ENCODE measurements at regions of chr10 and their contacts with region 1.

Region 1: DNA sequence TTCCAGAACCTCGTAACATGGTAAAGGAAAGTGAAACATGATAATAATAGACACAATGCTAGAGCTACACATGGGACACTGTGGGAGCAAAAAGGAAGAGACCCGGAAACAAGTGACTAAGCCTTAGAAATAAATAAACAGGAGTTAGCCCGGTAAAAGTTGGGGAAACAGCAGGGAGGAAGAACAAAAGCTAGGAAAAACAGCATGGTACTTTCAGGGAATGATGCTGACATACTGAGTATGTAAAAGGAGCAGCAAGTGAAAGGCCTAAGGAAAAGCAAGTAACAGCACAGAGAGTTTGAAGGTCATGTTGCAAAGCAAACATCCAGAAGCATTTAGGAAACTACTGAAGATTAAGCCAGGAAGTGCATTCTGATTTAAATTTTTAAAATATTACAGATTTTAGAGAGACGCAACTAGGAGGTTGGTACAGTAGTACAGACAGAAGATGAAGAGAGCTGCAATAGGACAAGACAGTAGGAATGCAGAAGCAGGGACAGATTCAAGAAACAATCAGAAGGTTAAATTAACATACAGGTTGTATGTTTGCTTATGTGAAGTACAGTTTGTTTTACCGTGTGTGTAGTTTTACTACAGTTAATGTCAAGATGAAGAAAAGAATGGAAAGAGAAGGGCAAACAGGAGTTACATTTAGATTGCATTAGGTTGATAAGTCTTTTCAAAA is 63.7 kb downstream of the ARHGAP12 start:
- DNase-seq: peak; percentile 85
- H3K4me3 ChIP-seq: peak overlapping the region in 1 of 3 experiments; percentile 60
- H3K27ac ChIP-seq: peak overlapping the region; percentile 29
- H3K4me1 ChIP-seq: peaks cover 22% of the 10 kb centered on the region
- H3K27me3 ChIP-seq: no peaks in the 10 kb centered on the region
- CTCF ChIP-seq: no peak
- POLR2A ChIP-seq: no peak

Region 2: DNA sequence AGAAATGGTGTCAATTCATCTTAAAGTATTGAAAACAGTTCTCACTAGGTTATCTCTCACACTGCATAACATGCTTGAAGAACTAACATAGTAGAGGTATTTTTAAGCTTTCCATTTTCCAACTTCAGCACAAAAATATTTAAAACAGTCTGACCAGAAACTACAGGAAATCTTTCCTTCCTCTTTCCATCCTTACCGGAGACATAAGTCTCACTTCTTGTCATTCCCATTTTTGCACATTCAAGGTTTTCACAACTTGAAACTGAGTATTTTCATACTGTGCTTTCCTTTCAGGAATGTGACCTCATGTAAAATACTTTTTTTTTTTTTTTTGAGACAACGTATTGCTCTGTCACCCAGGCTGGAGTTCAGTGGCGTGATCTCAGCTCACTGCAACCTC is 18.4 kb after region 1 on chr10:
- CTCF ChIA-PET with region 1: interaction called, 10 read pairs
- POLR2A ChIA-PET with region 1: no interaction called
- dilution Hi-C with region 1: no loop called
- intact Hi-C with region 1: no loop called
- DNase-seq: peak; percentile 13
- H3K4me3 ChIP-seq: no peak overlapping the region
- H3K27ac ChIP-seq: no peak overlapping the region
- H3K4me1 ChIP-seq: peaks cover 5% of the 10 kb centered on the region
- H3K27me3 ChIP-seq: no peaks in the 10 kb centered on the region
- CTCF ChIP-seq: no peak
- POLR2A ChIP-seq: no peak

Region 3: GRCh38 chr10:31921031-31921430 is 56.1 kb after region 1 on chr10:
- CTCF ChIA-PET with region 1: interaction called, 13 read pairs
- POLR2A ChIA-PET with region 1: interaction called, 3 read pairs
- dilution Hi-C with region 1: no loop called
- intact Hi-C with region 1: no loop called
- DNase-seq: no peak
- H3K4me3 ChIP-seq: no peak overlapping the region
- H3K27ac ChIP-seq: no peak overlapping the region
- H3K4me1 ChIP-seq: no peaks in the 10 kb centered on the region
- H3K27me3 ChIP-seq: no peaks in the 10 kb centered on the region
- CTCF ChIP-seq: no peak
- POLR2A ChIP-seq: no peak

Region 4: DNA sequence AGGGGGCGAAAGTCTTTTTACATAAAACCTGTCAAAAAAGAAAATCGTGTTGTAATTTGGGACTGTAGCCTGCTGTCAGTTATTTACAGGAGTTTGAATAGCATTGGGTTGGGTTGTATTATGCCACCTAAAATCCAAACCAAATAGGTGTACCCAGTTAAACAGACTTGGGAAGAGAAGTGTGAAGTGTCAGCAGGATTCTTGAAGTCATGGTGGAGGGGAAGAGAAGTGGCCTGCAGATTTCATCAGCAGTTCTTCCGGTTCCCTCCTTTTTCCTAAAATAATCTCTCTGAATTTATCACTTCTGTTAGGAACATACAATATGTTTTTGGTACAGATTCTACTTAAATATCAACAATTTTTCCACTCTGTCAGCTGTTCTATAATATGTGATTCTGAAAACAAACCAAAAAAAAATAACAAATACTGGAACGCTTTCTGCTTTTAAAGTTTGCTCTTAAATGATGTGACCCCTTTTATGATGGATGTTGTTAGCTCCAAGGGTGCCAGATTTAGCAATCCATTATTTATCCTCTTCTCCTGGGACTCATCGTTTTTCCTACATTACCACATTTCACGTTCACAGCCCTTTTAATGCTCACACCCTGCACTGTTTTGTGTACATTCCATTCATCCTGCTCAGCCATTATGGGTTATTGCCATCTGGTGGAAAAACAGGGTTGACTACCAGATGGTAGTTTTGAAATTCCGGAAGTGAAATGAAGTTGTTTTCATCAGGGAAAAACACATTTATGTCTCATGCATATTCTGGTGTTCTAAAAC is 82.4 kb after region 1 on chr10:
- CTCF ChIA-PET with region 1: interaction called, 104 read pairs
- POLR2A ChIA-PET with region 1: no interaction called
- dilution Hi-C with region 1: no loop called
- intact Hi-C with region 1: loop called (anchors 1 kb)
- DNase-seq: peak; percentile 83
- H3K4me3 ChIP-seq: no peak overlapping the region
- H3K27ac ChIP-seq: peak overlapping the region; percentile 62
- H3K4me1 ChIP-seq: peaks cover 31% of the 10 kb centered on the region
- H3K27me3 ChIP-seq: no peaks in the 10 kb centered on the region
- CTCF ChIP-seq: peak; percentile 33 to 48
- POLR2A ChIP-seq: no peak

Region 5: GRCh38 chr10:32005050-32005449 is 140.1 kb after region 1 on chr10:
- CTCF ChIA-PET with region 1: interaction called, 76 read pairs
- POLR2A ChIA-PET with region 1: interaction called, 6 read pairs
- dilution Hi-C with region 1: no loop called
- intact Hi-C with region 1: loop called (anchors 1 kb)
- DNase-seq: peak; percentile 57
- H3K4me3 ChIP-seq: no peak overlapping the region
- H3K27ac ChIP-seq: no peak overlapping the region
- H3K4me1 ChIP-seq: no peaks in the 10 kb centered on the region
- H3K27me3 ChIP-seq: no peaks in the 10 kb centered on the region
- CTCF ChIP-seq: peak; percentile 41 to 55
- POLR2A ChIP-seq: no peak